Activated T-helper 2 cell treated with anti-CD3 and anti-CD28 coated beads, Interferon-gamma antibody, Interleukin-2, Interleukin-4, amounts not matched to agents 10 μg/mL and 5 μg/mL and 100 μg/mL, durations not matched to agents 14 hours and 24 hours and 36 hours (primary cell): ENCODE measurements at regions of chr9 and their contacts with region 1.

Region 1: GRCh38 chr9:71891557-71892189 is 19.3 kb downstream of the ABHD17B start:
- DNase-seq: no peak
- H3K4me3 Mint-ChIP-seq: no peak overlapping the region
- H3K27ac Mint-ChIP-seq: no peak overlapping the region
- H3K4me1 Mint-ChIP-seq: peaks cover 51% of the 10 kb centered on the region
- H3K27me3 Mint-ChIP-seq: no peaks in the 10 kb centered on the region

Region 2: GRCh38 chr9:71878327-71879274 is 13.1 kb before region 1 on chr9:
- intact Hi-C with region 1: loop called (anchors 2 kb)
- DNase-seq: no peak
- H3K4me3 Mint-ChIP-seq: no peak overlapping the region
- H3K27ac Mint-ChIP-seq: peak overlapping the region; percentile 38
- H3K4me1 Mint-ChIP-seq: peaks cover 12% of the 10 kb centered on the region
- H3K27me3 Mint-ChIP-seq: no peaks in the 10 kb centered on the region